ENCODE measurements at regions of chr19 and their contacts with region 1.

Region 1: DNA sequence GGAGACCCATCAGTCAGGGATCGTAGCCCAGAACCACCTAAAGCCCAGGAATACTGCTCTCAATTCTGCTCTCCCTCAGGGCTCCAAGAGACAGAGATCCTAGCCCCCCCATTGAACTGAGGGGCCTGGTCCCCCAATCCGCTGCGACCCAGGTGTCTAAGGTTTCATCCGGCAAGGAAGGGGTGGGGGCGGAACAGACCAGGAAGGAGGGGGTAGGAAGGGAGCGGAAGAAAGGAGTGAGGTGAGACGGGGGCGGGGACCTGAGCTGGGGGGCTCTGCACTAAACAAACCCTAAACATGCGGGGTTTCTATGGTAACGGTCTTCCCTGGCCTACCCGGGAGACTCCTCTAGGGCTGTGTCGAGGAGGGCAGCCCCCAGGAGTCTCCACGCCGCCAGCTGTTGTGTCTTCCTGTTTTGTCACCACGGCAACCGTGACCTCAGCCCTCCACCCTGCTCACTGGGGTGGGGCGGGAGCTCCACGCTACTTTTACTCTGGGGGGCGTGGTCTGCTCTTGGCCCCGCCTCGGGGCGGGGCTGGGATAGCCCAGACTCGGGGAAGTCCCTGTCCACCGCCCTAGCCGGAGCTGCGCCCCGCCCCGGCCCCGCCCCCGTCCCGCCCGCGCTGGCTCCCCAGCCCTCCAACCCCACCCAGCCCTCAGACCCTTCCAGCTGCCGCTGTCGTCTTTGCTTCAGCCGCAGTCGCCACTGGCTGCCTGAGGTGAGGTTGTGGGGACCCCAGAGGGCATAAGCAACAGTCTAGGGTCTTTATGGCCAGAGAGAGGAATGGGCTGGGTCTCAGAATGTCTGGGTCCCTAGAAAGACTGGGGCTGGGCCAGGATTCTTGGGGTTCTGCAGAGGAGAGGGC is at the start of gene MYADM:
- DNase-seq: peak; percentile 99 to 100 (median 100)
- ATAC-seq: peak; percentile 80
- H3K4me3 ChIP-seq: peak within 1 kb of the TSS; percentile 90
- H3K4me3 Mint-ChIP-seq: peak within 1 kb of the TSS; percentile 92 to 100 (median 97)
- H3K27ac ChIP-seq: peak within 1 kb of the TSS; percentile 99
- H3K27ac Mint-ChIP-seq: peak within 1 kb of the TSS; percentile 97 to 100 (median 99)
- H3K4me1 ChIP-seq: peaks cover 17 to 26% of the 10 kb centered on the region in 2 donors
- H3K4me1 Mint-ChIP-seq: peaks cover 15 to 45% (median 34%) of the 10 kb centered on the region in 7 donors
- H3K27me3 ChIP-seq: no peaks in the 10 kb centered on the region
- H3K27me3 Mint-ChIP-seq: peaks cover 0 to 5% (median 0%) of the 10 kb centered on the region in 5 donors
- total RNA-seq, gene MYADM: 51.5 to 524 (median 116) TPM

Region 2: GRCh38 chr19:53853707-53854106 is 13.8 kb before region 1 on chr19:
- CTCF ChIA-PET with region 1: interaction called, 3 read pairs
- POLR2A ChIA-PET with region 1: interaction called, 7 read pairs
- intact Hi-C with region 1: loop called (anchors 1 kb)
- DNase-seq: no peak
- ATAC-seq: no peak
- H3K4me3 ChIP-seq: no peak overlapping the region
- H3K4me3 Mint-ChIP-seq: no peak overlapping the region
- H3K27ac ChIP-seq: no peak overlapping the region
- H3K27ac Mint-ChIP-seq: no peak overlapping the region
- H3K4me1 ChIP-seq: no peaks in the 10 kb centered on the region
- H3K4me1 Mint-ChIP-seq: peaks cover 0 to 25% (median 2%) of the 10 kb centered on the region in 7 donors
- H3K27me3 ChIP-seq: peaks cover 0 to 4% of the 10 kb centered on the region in 2 donors
- H3K27me3 Mint-ChIP-seq: peaks cover 20 to 33% (median 23%) of the 10 kb centered on the region in 5 donors

Region 3: GRCh38 chr19:53977429-53977990 is 110.1 kb after region 1 on chr19:
- CTCF ChIA-PET with region 1: no interaction called
- POLR2A ChIA-PET with region 1: no interaction called
- intact Hi-C with region 1: loop called in 1 of 2 experiments (anchors 5 kb)
- DNase-seq: peak; percentile 34 to 69 (median 59)
- ATAC-seq: peak; percentile 83
- H3K4me3 ChIP-seq: peak overlapping the region; percentile 42
- H3K4me3 Mint-ChIP-seq: peak overlapping the region; percentile 73 to 90 (median 83)
- H3K27ac ChIP-seq: no peak overlapping the region
- H3K27ac Mint-ChIP-seq: peak overlapping the region in 2 of 9 donors; percentile 21 to 50
- H3K4me1 ChIP-seq: peaks cover 0 to 5% of the 10 kb centered on the region in 2 donors
- H3K4me1 Mint-ChIP-seq: peaks cover 14 to 41% (median 30%) of the 10 kb centered on the region in 7 donors
- H3K27me3 ChIP-seq: peaks cover 6 to 16% of the 10 kb centered on the region in 2 donors
- H3K27me3 Mint-ChIP-seq: peaks cover 48 to 70% (median 61%) of the 10 kb centered on the region in 5 donors

Region 4: GRCh38 chr19:54137086-54137921 is 269.8 kb after region 1 on chr19 and contains the start of gene CNOT3:
- CTCF ChIA-PET with region 1: no interaction called
- POLR2A ChIA-PET with region 1: interaction called, 12 read pairs
- intact Hi-C with region 1: loop called (anchors 1 kb)
- DNase-seq: peak; percentile 90 to 100 (median 100)
- ATAC-seq: peak; percentile 88
- H3K4me3 ChIP-seq: peak within 1 kb of the TSS; percentile 66
- H3K4me3 Mint-ChIP-seq: peak within 1 kb of the TSS; percentile 87 to 98 (median 90)
- H3K27ac ChIP-seq: peak within 1 kb of the TSS; percentile 97
- H3K27ac Mint-ChIP-seq: peak within 1 kb of the TSS; percentile 85 to 94 (median 92)
- H3K4me1 ChIP-seq: peaks cover 19 to 30% of the 10 kb centered on the region in 2 donors
- H3K4me1 Mint-ChIP-seq: peaks cover 33 to 60% (median 46%) of the 10 kb centered on the region in 7 donors
- H3K27me3 ChIP-seq: no peaks in the 10 kb centered on the region
- H3K27me3 Mint-ChIP-seq: no peaks in the 10 kb centered on the region
- total RNA-seq, gene CNOT3: 38.0 to 84.6 (median 63.9) TPM

Region 5: DNA sequence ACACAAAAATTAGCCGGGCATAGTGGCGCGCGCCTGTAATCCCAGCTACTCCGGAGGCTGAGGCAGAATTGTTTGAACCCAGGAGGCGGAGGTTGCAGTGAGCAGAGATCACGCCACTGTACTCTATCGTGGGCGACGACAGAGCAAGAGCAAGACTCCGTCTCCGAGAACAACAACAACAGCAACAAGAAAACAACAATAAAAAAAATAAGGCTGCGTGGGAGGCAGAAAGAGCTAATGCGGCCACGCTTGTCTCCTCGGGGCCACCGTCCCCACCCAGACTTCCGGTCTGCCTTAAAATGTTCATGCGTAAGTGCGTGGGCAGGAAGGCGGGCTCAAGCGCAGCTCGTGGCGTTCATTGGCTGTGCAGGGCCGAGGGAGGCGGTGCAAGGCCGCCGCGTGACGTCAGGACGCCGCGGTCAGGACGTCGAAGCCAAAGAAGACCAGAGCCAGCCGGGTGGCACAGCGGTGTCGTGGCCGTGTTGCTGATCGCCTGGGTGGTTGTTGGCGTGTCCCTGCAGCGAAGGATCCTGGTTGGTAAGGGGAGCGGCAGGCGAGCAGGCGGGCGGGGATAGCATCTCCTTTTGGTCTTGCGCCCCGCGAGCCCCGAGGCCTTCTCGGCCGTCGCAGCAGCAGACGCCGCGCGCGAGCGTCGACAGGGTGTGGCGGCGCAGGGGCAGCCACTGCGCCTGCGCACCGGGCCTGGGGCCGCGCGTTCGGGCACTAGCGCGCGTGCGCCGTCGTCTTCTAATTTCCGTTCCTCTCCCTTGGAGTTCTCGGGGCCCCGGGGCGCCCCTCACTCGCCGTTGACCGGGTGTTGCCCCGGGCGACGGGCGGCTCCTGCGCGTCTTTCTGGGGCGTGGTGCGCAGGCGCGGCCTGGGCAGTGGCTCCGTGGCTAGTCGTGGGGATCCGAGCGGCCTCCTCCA is 581.6 kb after region 1 on chr19 and contains the start of gene LENG8:
- CTCF ChIA-PET with region 1: no interaction called
- POLR2A ChIA-PET with region 1: no interaction called
- intact Hi-C with region 1: loop called (anchors 2 kb)
- DNase-seq: peak; percentile 95 to 99 (median 98)
- ATAC-seq: peak; percentile 94
- H3K4me3 ChIP-seq: peak within 1 kb of the TSS; percentile 85
- H3K4me3 Mint-ChIP-seq: peak within 1 kb of the TSS; percentile 93 to 99 (median 97)
- H3K27ac ChIP-seq: peak within 1 kb of the TSS; percentile 94
- H3K27ac Mint-ChIP-seq: peak within 1 kb of the TSS; percentile 97 to 100 (median 100)
- H3K4me1 ChIP-seq: peaks cover 19 to 39% of the 10 kb centered on the region in 2 donors
- H3K4me1 Mint-ChIP-seq: peaks cover 31 to 61% (median 54%) of the 10 kb centered on the region in 7 donors
- H3K27me3 ChIP-seq: no peaks in the 10 kb centered on the region
- H3K27me3 Mint-ChIP-seq: peaks cover 0 to 3% (median 0%) of the 10 kb centered on the region in 5 donors
- total RNA-seq, gene LENG8: 238 to 685 (median 503) TPM